IMR-90 (cell line): ENCODE measurements at regions of chr5 and their contacts with region 1.

Region 1: GRCh38 chr5:171913987-171914273 is 92.5 kb downstream of the FBXW11 start:
- DNase-seq: peak; percentile 21
- ATAC-seq: no peak
- H3K4me3 ChIP-seq: no peak overlapping the region
- H3K27ac ChIP-seq: no peak overlapping the region
- H3K4me1 ChIP-seq: peaks cover 4% of the 10 kb centered on the region
- H3K27me3 ChIP-seq: no peaks in the 10 kb centered on the region
- CTCF ChIP-seq: no peak
- POLR2A ChIP-seq: no peak
- RAD21 ChIP-seq: no peak

Region 2: GRCh38 chr5:171555160-171555559 is 358.8 kb before region 1 on chr5:
- CTCF ChIA-PET with region 1: no interaction called
- POLR2A ChIA-PET with region 1: no interaction called
- dilution Hi-C with region 1: no loop called
- in situ Hi-C with region 1: no loop called
- intact Hi-C with region 1: no loop called
- DNase-seq: no peak
- ATAC-seq: no peak
- H3K4me3 ChIP-seq: no peak overlapping the region
- H3K27ac ChIP-seq: no peak overlapping the region
- H3K4me1 ChIP-seq: no peaks in the 10 kb centered on the region
- H3K27me3 ChIP-seq: peaks cover 16% of the 10 kb centered on the region
- CTCF ChIP-seq: no peak
- POLR2A ChIP-seq: no peak
- RAD21 ChIP-seq: no peak

Region 3: DNA sequence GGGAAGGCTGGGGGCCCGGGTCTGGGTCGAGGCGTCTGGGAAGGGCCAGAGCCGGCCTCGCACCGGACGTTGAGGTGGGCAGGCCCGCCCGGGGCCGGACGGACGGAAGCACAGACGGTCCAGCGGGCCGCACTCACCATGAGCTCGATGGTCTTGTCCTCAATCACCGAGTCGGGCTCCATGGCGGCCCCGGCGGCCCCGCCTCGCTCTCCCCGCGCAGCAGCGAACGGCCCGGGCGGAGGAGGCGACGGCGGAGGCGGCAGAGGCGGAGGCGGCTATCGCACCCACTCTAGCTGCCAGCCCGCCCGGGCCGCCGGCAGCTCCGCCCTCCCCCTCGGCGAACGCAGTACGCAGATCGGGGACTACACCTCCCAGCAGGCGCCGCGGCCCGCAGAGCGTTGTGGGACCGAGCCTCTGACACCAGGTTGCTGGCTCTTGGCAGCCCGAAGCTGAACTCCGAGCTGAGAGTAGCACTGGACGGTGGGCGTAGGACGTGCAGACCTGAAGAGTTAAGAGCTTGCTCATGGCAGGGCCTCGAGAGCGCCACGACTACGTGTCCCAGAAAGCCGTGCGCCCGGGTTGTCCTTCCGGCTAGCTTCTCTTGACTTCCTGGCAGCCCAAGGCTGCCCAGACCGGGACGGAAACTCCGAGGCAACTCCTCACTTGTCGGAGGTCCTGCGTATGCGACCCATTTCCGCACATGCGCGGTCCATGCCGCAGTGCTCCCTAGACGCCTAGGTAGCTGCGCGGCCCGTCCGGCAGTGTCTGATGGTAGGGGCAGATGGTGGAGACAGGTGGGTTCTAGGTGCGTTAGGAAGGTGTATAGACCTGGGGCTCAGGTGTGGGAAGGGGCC is 92.6 kb after region 1 on chr5 and contains the start of gene FBXW11:
- CTCF ChIA-PET with region 1: interaction called, 18 read pairs
- POLR2A ChIA-PET with region 1: interaction called, 8 read pairs
- dilution Hi-C with region 1: no loop called
- in situ Hi-C with region 1: no loop called
- intact Hi-C with region 1: loop called (anchors 2 kb)
- DNase-seq: peak; percentile 97
- ATAC-seq: peak; percentile 91
- H3K4me3 ChIP-seq: peak within 1 kb of the TSS; percentile 77
- H3K27ac ChIP-seq: peak within 1 kb of the TSS; percentile 98
- H3K4me1 ChIP-seq: 0 out of 2 replicates have a peak, but pooled peaks cover 4% of the 10 kb centered on the region
- H3K27me3 ChIP-seq: no peaks in the 10 kb centered on the region
- CTCF ChIP-seq: no peak
- POLR2A ChIP-seq: peak; percentile 85
- RAD21 ChIP-seq: no peak
- total RNA-seq, gene FBXW11: 97.1 and 100 TPM in 2 replicates

Region 4: DNA sequence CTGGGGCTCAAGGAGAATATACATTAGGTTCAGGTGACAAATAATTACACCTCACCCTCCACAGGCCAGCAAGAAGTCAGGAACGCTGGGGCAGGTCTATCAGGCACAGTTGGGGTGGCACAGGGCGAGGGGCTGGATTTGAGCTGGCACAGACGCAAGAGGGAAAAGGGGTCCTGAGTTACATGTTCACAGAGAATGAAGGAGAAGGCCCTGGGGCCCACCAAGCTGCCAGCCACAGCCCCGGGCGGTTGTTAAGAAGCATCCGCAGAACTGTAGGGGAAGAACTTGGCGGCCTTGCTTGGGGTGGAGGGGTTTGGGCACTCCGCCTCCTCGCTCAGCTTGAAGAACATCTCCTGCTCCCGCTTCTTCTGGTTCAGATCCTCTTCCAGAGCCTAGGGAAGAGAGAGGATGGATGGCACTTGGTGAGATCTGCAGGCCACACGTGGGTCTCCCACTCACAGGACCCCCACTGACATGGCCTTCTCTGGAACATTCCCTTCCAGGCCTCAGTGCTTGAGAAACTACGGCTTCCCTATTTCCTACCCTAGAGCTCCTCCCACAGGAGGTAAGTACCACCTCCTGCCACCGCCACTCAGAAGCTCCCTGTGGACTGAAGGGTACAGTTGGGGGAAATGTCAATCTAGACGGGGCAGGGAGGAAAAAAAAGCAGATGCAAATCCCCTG is 130.8 kb after region 1 on chr5:
- CTCF ChIA-PET with region 1: interaction called, 6 read pairs
- POLR2A ChIA-PET with region 1: no interaction called
- dilution Hi-C with region 1: no loop called
- in situ Hi-C with region 1: loop called (anchors 10 kb)
- intact Hi-C with region 1: loop called (anchors 1 kb)
- DNase-seq: no peak
- ATAC-seq: no peak
- H3K4me3 ChIP-seq: no peak overlapping the region
- H3K27ac ChIP-seq: no peak overlapping the region
- H3K4me1 ChIP-seq: no peaks in the 10 kb centered on the region
- H3K27me3 ChIP-seq: no peaks in the 10 kb centered on the region
- CTCF ChIP-seq: no peak
- POLR2A ChIP-seq: no peak
- RAD21 ChIP-seq: no peak

Region 5: GRCh38 chr5:172059661-172060100 is 145.8 kb after region 1 on chr5:
- CTCF ChIA-PET with region 1: interaction called, 12 read pairs
- POLR2A ChIA-PET with region 1: no interaction called
- dilution Hi-C with region 1: no loop called
- in situ Hi-C with region 1: no loop called
- intact Hi-C with region 1: loop called (anchors 1 kb)
- DNase-seq: no peak
- ATAC-seq: peak; percentile 63
- H3K4me3 ChIP-seq: no peak overlapping the region
- H3K27ac ChIP-seq: no peak overlapping the region
- H3K4me1 ChIP-seq: no peaks in the 10 kb centered on the region
- H3K27me3 ChIP-seq: no peaks in the 10 kb centered on the region
- CTCF ChIP-seq: peak; percentile 55
- POLR2A ChIP-seq: no peak
- RAD21 ChIP-seq: peak; percentile 69

Region 6: DNA sequence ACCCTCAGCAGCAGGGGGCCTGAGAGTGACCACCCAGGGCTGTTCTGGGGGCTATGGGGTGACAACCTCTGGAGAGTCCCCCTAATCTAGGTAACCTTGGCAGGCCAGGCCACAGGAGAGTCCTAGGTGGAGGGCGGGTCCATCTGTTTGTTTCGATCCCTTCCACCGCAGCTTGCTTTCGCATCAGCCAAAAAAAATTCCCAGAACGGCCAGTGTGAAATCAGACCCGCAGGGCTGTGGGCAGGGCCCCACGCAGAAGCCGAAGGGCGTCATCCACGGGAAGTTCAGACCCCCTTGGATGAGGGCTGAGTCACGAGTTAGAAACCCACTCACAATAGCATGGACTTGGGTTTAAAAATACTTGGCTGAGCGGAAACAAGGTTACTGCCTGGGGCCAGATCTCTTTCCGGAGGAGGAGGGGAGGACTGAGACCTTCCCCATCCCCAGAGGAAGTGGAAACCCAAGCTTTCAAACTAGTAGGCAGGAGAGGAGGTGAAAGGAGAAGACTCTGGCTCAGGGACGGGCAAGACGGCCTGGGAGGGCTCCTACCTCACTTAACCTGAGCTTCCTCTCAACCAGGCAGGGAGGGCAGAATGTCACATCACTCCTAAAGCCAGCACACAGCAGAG is 265.5 kb after region 1 on chr5:
- CTCF ChIA-PET with region 1: no interaction called
- POLR2A ChIA-PET with region 1: no interaction called
- dilution Hi-C with region 1: no loop called
- in situ Hi-C with region 1: no loop called
- intact Hi-C with region 1: no loop called
- DNase-seq: peak; percentile 40
- ATAC-seq: peak; percentile 40
- H3K4me3 ChIP-seq: no peak overlapping the region
- H3K27ac ChIP-seq: no peak overlapping the region
- H3K4me1 ChIP-seq: peaks cover 5% of the 10 kb centered on the region; the same call in 1 of the 2 replicates
- H3K27me3 ChIP-seq: no peaks in the 10 kb centered on the region
- CTCF ChIP-seq: no peak
- POLR2A ChIP-seq: no peak
- RAD21 ChIP-seq: no peak

Region 7: GRCh38 chr5:172293054-172293744 is 379.3 kb after region 1 on chr5:
- CTCF ChIA-PET with region 1: no interaction called
- POLR2A ChIA-PET with region 1: no interaction called
- dilution Hi-C with region 1: no loop called
- in situ Hi-C with region 1: no loop called
- intact Hi-C with region 1: loop called (anchors 5 kb)
- DNase-seq: peak; percentile 72
- ATAC-seq: peak; percentile 100
- H3K4me3 ChIP-seq: no peak overlapping the region
- H3K27ac ChIP-seq: no peak overlapping the region
- H3K4me1 ChIP-seq: no peaks in the 10 kb centered on the region
- H3K27me3 ChIP-seq: 0 out of 2 replicates have a peak, but pooled peaks cover 2% of the 10 kb centered on the region
- CTCF ChIP-seq: peak; percentile 93
- POLR2A ChIP-seq: no peak
- RAD21 ChIP-seq: peak; percentile 87